GM12878 (cell line): ENCODE measurements at regions of chr16 and their contacts with region 1.

Region 1: GRCh38 chr16:19375561-19376158 is 42.0 kb upstream of the TMC5 start:
- DNase-seq: peak; percentile 28
- ATAC-seq: peak; percentile 80
- H3K4me3 ChIP-seq: no peak overlapping the region
- H3K27ac ChIP-seq: no peak overlapping the region
- H3K4me1 ChIP-seq: peaks cover 3% of the 10 kb centered on the region; the same call in 1 of the 2 replicates
- H3K27me3 ChIP-seq: no peaks in the 10 kb centered on the region
- CTCF ChIP-seq: peak; percentile 77 to 91 (median 81)
- EP300 ChIP-seq: no peak
- POLR2A ChIP-seq: no peak
- RAD21 ChIP-seq: peak; percentile 99

Region 2: GRCh38 chr16:19162085-19162484 is 213.6 kb before region 1 on chr16:
- CTCF ChIA-PET with region 1: interaction called, 4 read pairs
- POLR2A ChIA-PET with region 1: no interaction called
- RAD21 ChIA-PET with region 1: no interaction called
- SMC1A ChIA-PET with region 1: no interaction called
- in situ Hi-C with region 1: loop called (anchors 5 kb)
- intact Hi-C with region 1: loop called (anchors 1 kb)
- DNase-seq: no peak
- ATAC-seq: no peak
- H3K4me3 ChIP-seq: no peak overlapping the region
- H3K27ac ChIP-seq: no peak overlapping the region
- H3K4me1 ChIP-seq: no peaks in the 10 kb centered on the region
- H3K27me3 ChIP-seq: no peaks in the 10 kb centered on the region
- CTCF ChIP-seq: no peak
- EP300 ChIP-seq: no peak
- POLR2A ChIP-seq: no peak
- RAD21 ChIP-seq: no peak

Region 3: GRCh38 chr16:19167710-19168370 is 207.8 kb before region 1 on chr16 and contains the start of gene SYT17:
- CTCF ChIA-PET with region 1: interaction called, 4 read pairs
- POLR2A ChIA-PET with region 1: no interaction called
- RAD21 ChIA-PET with region 1: no interaction called
- SMC1A ChIA-PET with region 1: no interaction called
- in situ Hi-C with region 1: loop called (anchors 5 kb)
- intact Hi-C with region 1: loop called (anchors 1 kb)
- DNase-seq: no peak
- ATAC-seq: peak; percentile 98
- H3K4me3 ChIP-seq: peak within 1 kb of the TSS; percentile 21; the same call in 1 of the 2 replicates
- H3K27ac ChIP-seq: no peak within 1 kb of the TSS
- H3K4me1 ChIP-seq: no peaks in the 10 kb centered on the region
- H3K27me3 ChIP-seq: no peaks in the 10 kb centered on the region; a peak in 1 of 4 replicates
- CTCF ChIP-seq: peak; percentile 68 to 83 (median 78)
- EP300 ChIP-seq: no peak
- POLR2A ChIP-seq: no peak
- RAD21 ChIP-seq: peak; percentile 75
- polyA plus RNA-seq, gene SYT17: 10.2 to 12.3 TPM

Region 4: GRCh38 chr16:19179546-19180490 is 195.8 kb before region 1 on chr16:
- CTCF ChIA-PET with region 1: interaction called, 10 read pairs
- POLR2A ChIA-PET with region 1: no interaction called
- RAD21 ChIA-PET with region 1: interaction called, 4 read pairs
- SMC1A ChIA-PET with region 1: interaction called, 6 read pairs
- in situ Hi-C with region 1: no loop called
- intact Hi-C with region 1: loop called (anchors 5 kb)
- DNase-seq: no peak
- ATAC-seq: peak; percentile 94
- H3K4me3 ChIP-seq: no peak overlapping the region
- H3K27ac ChIP-seq: no peak overlapping the region
- H3K4me1 ChIP-seq: no peaks in the 10 kb centered on the region
- H3K27me3 ChIP-seq: no peaks in the 10 kb centered on the region
- CTCF ChIP-seq: peak; percentile 61 to 75 (median 68)
- EP300 ChIP-seq: no peak
- POLR2A ChIP-seq: no peak
- RAD21 ChIP-seq: peak; percentile 55